ENCODE measurements at regions of chr20 and their contacts with region 1.

Region 1: DNA sequence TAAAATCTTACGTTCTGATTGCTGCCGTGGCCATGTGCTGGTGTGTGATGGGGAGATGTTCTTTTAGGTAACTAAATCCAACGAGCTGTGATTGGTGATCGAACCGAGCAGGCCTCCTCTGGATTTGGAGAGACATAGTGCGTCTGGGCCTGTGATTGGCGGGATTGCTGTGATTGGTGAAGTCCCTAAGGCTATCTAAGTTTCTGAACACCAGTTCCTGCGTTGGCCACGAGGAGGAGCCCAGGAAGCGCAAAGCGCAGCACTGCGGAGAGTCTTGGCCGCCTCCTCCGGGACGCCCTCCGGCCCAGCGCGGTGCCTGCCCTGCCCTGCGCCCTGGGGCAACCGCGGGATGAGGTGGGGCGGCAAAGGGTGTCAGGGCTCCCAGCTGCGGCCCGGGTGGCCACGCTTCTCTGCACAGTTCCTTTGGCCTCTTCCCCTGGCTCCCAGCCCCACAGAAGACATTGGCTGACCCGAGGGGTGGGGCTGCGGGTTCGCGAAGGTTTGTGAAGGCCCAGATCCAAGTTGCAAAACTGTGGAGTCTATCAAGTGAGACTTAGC is 33.0 kb downstream of the HNF4A start:
- DNase-seq: peak; percentile 95
- ATAC-seq: peak; percentile 96
- H3K4me3 Mint-ChIP-seq: peak overlapping the region; percentile 57
- H3K27ac Mint-ChIP-seq: peak overlapping the region; percentile 11; the same call in 1 of the 2 replicates
- H3K4me1 Mint-ChIP-seq: peaks cover 7% of the 10 kb centered on the region
- H3K27me3 Mint-ChIP-seq: peaks cover 13% of the 10 kb centered on the region
- CTCF ChIP-seq: peak; percentile 78

Region 2: DNA sequence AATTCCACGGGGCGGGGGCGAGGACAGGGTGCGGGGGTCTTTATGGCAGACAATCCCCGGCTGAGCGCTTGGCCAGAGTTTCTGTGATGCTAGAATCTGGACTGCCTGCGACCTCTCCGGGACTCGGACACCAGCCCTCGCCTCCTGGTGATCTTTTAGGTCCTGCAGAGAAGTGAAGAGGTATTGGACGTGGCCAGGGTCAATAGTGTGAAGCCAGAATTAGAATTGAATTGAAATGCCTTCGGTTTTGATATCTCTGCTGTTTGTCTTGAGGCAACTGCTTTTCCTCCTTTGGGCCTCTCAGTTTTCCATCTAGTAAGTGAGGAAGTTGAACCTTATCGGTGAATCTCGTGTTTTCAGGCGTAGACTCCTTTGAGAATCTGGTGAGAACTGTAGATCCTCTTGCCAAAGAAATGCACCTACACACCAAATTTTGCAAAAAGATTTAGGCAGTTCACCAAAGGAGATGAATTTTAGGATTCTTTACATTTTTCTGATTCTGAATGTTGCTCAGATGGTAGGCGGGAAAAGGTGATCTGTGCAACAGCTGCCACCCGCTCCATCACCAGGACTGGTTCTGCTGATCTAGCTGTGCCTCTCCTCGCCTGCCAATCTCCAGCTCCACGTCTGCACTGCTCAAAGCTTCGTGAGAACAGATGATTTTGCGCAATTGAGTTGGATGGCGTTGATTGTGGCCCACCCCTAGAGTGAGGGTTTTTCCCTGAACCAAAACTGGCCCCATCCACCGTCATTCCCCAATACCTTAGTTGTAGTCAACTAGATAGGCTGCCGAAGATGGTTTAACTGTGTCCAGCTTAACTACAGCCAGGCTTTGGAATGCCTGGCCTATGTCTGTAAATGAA is 177.1 kb before region 1 on chr20:
- CTCF ChIA-PET with region 1: interaction called, 77 read pairs
- POLR2A ChIA-PET with region 1: interaction called, 3 read pairs
- DNase-seq: no peak
- ATAC-seq: no peak; the same call in 1 of the 2 replicates
- H3K4me3 Mint-ChIP-seq: peak overlapping the region; percentile 100
- H3K27ac Mint-ChIP-seq: peak overlapping the region; percentile 96
- H3K4me1 Mint-ChIP-seq: peaks cover 46% of the 10 kb centered on the region
- H3K27me3 Mint-ChIP-seq: no peaks in the 10 kb centered on the region
- CTCF ChIP-seq: no peak

Region 3: DNA sequence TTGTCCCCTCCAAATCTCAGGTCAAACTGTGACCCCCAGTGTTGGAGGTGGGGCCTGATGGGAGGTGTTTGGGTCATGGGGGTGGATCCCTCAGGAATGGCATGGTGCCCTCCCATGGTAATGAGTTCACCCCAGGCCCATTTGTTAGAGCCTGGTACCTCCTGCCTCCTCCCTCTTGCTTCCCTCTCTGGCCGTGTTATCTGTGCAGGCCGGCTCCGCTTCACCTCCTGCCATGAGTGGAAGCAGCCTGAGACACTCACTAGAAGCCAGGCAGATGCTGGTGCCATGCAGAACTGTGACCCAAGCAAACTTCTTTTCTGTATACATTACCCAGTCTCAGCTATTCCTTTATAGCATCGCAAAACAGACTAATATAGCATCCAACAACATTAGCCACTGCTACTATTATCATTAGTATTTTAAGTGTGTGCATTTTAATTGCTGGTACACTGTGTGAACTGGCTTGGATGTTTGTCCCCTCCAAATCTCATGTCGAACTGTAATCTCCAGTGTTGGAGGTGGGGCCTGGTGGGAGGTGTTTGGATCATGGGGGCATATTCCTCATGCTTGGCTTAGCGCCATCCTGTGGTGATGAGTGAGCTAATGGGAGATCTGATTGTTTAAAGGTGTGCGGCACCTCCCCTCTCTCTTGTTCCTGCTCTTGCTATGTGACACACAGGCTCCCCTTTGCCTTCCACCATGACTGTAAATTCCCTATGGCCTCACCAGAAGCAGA is 165.7 kb before region 1 on chr20:
- CTCF ChIA-PET with region 1: interaction called, 77 read pairs
- POLR2A ChIA-PET with region 1: interaction called, 3 read pairs
- DNase-seq: peak; percentile 64
- ATAC-seq: peak; percentile 94
- H3K4me3 Mint-ChIP-seq: no peak overlapping the region
- H3K27ac Mint-ChIP-seq: no peak overlapping the region; the same call in 1 of the 2 replicates
- H3K4me1 Mint-ChIP-seq: peaks cover 12% of the 10 kb centered on the region
- H3K27me3 Mint-ChIP-seq: no peaks in the 10 kb centered on the region
- CTCF ChIP-seq: no peak; the same call in 1 of the 2 replicates

Region 4: DNA sequence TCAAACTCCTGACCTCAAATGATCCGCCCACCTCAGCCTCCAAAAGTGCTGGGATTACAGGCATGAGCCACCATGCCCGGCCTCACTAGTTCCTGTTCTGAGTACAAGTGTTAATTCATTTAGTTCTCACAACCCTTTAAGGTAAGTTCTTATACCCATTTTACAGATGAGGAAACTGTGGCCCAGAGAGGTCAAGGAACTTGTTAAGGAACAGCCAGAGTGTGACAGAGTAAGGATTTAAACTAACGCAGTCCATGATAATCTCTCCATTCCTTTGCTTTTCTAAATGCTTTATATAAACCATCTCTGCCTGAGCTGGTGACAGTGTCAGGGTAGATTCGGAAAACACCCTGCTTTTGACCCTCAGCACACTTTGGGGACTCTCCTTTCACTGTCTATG is 90.8 kb before region 1 on chr20:
- CTCF ChIA-PET with region 1: no interaction called
- POLR2A ChIA-PET with region 1: no interaction called
- DNase-seq: no peak
- ATAC-seq: no peak
- H3K4me3 Mint-ChIP-seq: no peak overlapping the region
- H3K27ac Mint-ChIP-seq: no peak overlapping the region
- H3K4me1 Mint-ChIP-seq: peaks cover 3% of the 10 kb centered on the region
- H3K27me3 Mint-ChIP-seq: no peaks in the 10 kb centered on the region; the same call in 1 of the 2 replicates
- CTCF ChIP-seq: no peak

Region 5: DNA sequence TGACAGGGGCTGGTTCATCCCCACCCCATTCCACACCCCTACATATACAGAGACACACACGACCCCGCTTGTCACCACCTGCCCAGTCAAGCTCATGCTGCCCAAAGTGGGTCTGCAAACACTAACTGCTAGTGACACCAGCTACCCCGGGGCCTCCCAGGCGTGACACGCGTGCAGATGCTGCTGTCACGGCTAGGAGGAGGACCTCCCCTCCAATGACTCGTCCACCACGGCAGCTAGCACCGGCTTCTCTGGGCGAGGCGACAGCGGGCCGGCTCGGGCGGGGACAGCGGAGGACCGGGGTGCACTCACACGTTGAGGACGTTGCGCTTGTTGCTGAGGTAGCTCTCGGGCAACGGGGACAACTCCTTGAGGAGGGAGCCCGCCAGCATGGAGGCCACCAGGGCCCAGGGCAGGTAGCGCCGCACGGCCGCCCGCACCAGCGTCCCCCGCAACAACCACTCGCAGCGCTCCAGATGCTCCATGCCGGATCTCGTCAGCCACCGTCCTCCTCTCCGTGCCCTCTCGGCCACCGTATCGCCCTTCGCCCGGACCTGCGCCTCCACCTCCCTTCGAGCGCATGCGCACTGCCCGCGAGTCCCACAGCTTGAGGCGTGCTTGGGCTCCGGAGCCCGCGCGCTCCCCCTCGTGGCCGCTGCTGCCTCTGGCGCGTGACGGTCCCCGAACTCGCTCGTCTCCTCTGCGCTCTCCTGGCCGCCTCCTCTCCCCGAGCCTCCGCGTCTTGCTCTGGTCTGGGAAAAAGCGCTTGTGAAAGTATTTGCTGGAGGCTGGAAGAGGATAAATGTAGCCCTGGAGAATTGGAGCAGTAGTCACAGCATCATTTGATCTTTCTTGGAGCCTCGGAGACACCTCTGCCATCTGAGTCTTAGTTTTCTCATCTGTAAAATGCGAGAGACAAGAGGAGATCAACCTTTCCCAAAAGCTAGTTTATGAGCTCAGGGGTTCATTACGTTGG is 77.6 kb before region 1 on chr20 and contains the start of gene FITM2:
- CTCF ChIA-PET with region 1: interaction called, 24 read pairs
- POLR2A ChIA-PET with region 1: no interaction called
- DNase-seq: peak; percentile 98
- ATAC-seq: peak; percentile 94
- H3K4me3 Mint-ChIP-seq: peak within 1 kb of the TSS; percentile 81
- H3K27ac Mint-ChIP-seq: no peak within 1 kb of the TSS
- H3K4me1 Mint-ChIP-seq: peaks cover 10% of the 10 kb centered on the region
- H3K27me3 Mint-ChIP-seq: peaks cover 32% of the 10 kb centered on the region
- CTCF ChIP-seq: peak; percentile 69
- total RNA-seq, gene FITM2: 2.0 to 2.5 TPM (median 2.4 TPM) in 3 replicates

Region 6: DNA sequence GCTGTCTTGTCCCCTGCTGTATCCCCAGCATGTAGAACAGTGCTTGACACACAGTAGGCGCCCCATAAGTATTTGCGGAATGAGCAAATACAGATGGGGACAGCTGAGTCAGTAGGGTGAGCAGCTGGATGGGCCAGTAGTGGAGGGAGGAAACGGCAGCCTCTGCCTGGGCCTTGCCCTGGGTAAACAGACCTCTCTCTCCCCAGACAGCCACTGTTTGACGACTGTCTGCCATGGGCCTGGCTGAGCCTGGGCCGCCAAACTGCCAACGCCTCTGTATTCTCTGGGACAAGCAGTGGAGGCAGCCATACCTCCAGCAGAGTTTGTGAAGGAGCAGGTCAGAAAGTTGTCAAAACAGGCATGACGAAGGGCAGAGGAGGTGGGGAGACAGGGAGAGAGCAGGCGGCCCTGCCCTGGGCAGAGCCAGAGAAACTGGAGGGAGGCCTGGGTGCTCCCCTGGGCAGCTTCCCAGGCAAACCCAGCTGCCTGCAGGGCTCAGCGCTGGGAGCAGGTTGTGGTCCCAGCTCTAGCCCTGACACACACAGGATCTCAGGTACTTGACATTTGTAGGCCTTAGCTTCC is 17.8 kb before region 1 on chr20:
- CTCF ChIA-PET with region 1: interaction called, 11 read pairs
- POLR2A ChIA-PET with region 1: no interaction called
- DNase-seq: no peak
- ATAC-seq: peak; percentile 60
- H3K4me3 Mint-ChIP-seq: no peak overlapping the region
- H3K27ac Mint-ChIP-seq: no peak overlapping the region
- H3K4me1 Mint-ChIP-seq: peaks cover 6% of the 10 kb centered on the region; the same call in 1 of the 2 replicates
- H3K27me3 Mint-ChIP-seq: no peaks in the 10 kb centered on the region; the same call in 1 of the 2 replicates
- CTCF ChIP-seq: no peak

Region 7: GRCh38 chr20:44475694-44476560 is 87.4 kb after region 1 on chr20 and contains the start of gene TTPAL:
- CTCF ChIA-PET with region 1: interaction called, 14 read pairs
- POLR2A ChIA-PET with region 1: no interaction called
- DNase-seq: peak; percentile 90
- ATAC-seq: peak; percentile 96
- H3K4me3 Mint-ChIP-seq: peak within 1 kb of the TSS; percentile 90
- H3K27ac Mint-ChIP-seq: peak within 1 kb of the TSS; percentile 92
- H3K4me1 Mint-ChIP-seq: peaks cover 14% of the 10 kb centered on the region
- H3K27me3 Mint-ChIP-seq: peaks cover 2% of the 10 kb centered on the region
- CTCF ChIP-seq: no peak
- total RNA-seq, gene TTPAL: 10.3 to 16.5 TPM (median 13.7 TPM) in 3 replicates

Region 8: GRCh38 chr20:45174434-45175364 is 786.2 kb after region 1 on chr20 and contains the start of gene PI3:
- CTCF ChIA-PET with region 1: no interaction called
- POLR2A ChIA-PET with region 1: no interaction called
- DNase-seq: no peak
- ATAC-seq: no peak
- H3K4me3 Mint-ChIP-seq: no peak within 1 kb of the TSS
- H3K27ac Mint-ChIP-seq: no peak within 1 kb of the TSS
- H3K4me1 Mint-ChIP-seq: peaks cover 7% of the 10 kb centered on the region; the same call in 1 of the 2 replicates
- H3K27me3 Mint-ChIP-seq: peaks cover 16% of the 10 kb centered on the region
- CTCF ChIP-seq: no peak
- total RNA-seq, gene PI3: not detected in 3 replicates

Measured in WTC11 (cell line).